ENCODE measurements at regions of chr1 and their contacts with region 1.

Region 1: GRCh38 chr1:24391882-24392603 is 21.5 kb downstream of the STPG1 start:
- DNase-seq: peak; percentile 24 to 67 (median 52)
- H3K4me3 ChIP-seq: no peak overlapping the region
- H3K27ac ChIP-seq: peak overlapping the region; percentile 13 to 68
- H3K4me1 ChIP-seq: no peaks in the 10 kb centered on the region
- H3K27me3 ChIP-seq: no peaks in the 10 kb centered on the region
- CTCF ChIP-seq: peak in 2 of 3 donors; percentile 37
- EP300 ChIP-seq: no peak
- POLR2A ChIP-seq: no peak

Region 2: GRCh38 chr1:24070821-24071393 is 321.1 kb before region 1 on chr1:
- intact Hi-C with region 1: loop called in 1 of 4 experiments (anchors 10 kb)
- DNase-seq: peak; percentile 74 to 82 (median 78)
- H3K4me3 ChIP-seq: no peak overlapping the region
- H3K27ac ChIP-seq: no peak overlapping the region
- H3K4me1 ChIP-seq: no peaks in the 10 kb centered on the region
- H3K27me3 ChIP-seq: no peaks in the 10 kb centered on the region
- CTCF ChIP-seq: peak; percentile 82 to 86 (median 83)
- EP300 ChIP-seq: no peak
- POLR2A ChIP-seq: no peak